ENCODE measurements at regions of chr4 and their contacts with region 1.

Region 1: DNA sequence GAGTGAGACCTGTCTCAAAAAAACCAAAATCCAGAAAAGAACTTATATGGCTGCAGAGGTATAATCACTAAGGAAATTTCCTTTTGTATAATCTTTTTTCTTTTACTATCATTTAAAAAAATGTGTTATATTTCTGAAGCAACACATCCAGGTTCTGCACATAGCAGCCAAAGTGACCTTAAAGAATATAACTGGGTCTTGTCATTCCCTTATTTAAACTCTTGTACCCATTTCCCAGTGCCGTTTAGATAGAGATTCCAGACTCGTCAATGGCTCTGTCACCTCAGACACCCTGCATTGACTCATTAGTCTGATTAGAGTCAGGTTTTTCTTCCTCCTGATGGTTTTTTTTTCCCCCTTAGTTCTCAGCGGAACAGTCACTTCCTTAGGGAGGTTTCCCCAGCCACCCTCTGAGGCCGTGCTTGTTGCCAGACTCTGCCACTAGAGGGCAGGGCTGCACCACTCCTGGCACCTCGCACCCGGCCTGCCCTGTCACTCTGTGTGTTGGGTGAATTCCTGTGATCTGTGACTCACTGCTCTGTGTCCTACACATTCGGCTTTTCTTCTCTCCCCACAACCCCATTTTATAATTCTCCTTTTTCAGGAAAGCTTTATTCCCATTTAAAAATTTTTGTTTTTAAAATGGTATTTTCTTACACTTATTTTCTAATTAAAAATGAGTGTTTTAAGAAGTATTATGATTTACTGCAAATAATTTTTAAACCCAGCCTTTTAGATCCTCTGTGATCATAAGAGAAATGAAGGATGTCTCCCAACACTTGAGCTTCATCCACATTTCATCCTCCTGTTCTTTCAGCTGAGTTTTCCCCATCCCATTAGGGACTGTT is 32.1 kb downstream of the HTT start:
- DNase-seq: peak; percentile 98
- H3K4me3 Mint-ChIP-seq: no peak overlapping the region
- H3K27ac Mint-ChIP-seq: peak overlapping the region; percentile 34
- H3K4me1 Mint-ChIP-seq: peaks cover 17% of the 10 kb centered on the region
- H3K27me3 Mint-ChIP-seq: no peaks in the 10 kb centered on the region

Region 2: DNA sequence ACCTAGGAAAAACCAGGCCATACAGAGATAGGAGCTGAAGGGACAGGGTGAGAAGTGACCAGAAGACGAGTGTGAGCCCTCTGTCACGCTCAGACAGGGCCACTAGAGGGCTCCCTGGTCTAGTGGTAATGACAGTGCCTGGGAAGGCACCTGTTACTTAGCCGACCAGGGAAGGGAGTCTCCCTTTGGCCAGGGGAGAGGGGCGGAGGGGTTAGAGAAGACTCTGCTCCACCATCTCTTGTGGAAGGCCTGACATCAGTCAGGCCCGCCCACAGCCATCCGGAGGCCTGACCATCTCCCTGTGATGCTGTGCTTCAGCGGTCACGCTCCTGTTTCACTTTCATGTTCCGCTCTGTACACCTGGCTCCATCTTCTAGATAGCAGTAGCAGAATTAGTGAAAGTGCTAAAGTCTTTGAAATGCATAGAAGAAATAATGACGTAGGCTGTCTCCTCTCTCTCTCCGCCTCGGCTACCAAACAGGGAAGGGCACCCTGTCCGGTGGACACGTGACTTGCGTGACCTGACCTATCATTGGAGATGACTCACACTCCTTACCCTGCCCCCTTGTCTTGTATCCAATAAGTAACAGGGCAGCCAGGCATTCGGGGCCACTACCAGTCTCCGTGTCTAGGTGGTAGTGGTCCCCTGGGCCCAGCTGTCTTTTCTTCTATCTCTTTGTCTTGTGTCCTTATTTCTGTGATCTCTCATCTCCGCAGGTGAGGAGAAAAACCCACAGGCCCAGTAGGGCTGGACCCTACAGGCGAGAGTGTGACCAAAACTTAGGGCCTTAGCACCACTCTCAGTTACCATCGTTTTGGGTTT is 58.9 kb before region 1 on chr4:
- CTCF ChIA-PET with region 1: interaction called, 5 read pairs
- intact Hi-C with region 1: loop called (anchors 1 kb)
- DNase-seq: peak; percentile 91
- H3K4me3 Mint-ChIP-seq: peak overlapping the region; percentile 28
- H3K27ac Mint-ChIP-seq: peak overlapping the region; percentile 54
- H3K4me1 Mint-ChIP-seq: peaks cover 31% of the 10 kb centered on the region
- H3K27me3 Mint-ChIP-seq: no peaks in the 10 kb centered on the region

Region 3: DNA sequence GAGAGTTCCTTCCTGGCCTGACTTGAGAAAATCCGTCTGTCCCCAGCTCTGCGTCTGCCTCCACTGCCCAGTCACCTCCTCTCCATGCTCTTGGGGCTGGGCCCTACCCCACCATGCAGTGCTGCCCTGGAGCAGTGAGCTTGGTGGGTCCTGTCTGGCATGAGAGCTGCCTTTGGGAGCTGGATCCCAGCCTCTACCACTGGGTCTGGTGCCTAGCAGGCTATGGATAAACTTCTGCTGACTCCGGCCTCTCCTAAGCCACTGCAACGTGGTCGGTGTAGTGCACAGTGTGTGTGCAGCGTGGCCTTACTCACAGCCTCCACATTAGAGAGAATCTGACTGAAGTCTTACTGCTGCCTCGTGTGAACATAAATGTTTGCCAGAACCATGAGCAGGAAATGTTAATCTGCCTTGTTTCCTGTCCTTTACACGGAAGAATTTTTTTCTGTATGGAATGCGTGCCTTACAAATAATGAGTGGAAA is 15.6 kb after region 1 on chr4:
- CTCF ChIA-PET with region 1: interaction called, 13 read pairs
- intact Hi-C with region 1: no loop called
- DNase-seq: peak; percentile 18
- H3K4me3 Mint-ChIP-seq: no peak overlapping the region
- H3K27ac Mint-ChIP-seq: peak overlapping the region; percentile 39
- H3K4me1 Mint-ChIP-seq: peaks cover 24% of the 10 kb centered on the region
- H3K27me3 Mint-ChIP-seq: no peaks in the 10 kb centered on the region

Region 4: DNA sequence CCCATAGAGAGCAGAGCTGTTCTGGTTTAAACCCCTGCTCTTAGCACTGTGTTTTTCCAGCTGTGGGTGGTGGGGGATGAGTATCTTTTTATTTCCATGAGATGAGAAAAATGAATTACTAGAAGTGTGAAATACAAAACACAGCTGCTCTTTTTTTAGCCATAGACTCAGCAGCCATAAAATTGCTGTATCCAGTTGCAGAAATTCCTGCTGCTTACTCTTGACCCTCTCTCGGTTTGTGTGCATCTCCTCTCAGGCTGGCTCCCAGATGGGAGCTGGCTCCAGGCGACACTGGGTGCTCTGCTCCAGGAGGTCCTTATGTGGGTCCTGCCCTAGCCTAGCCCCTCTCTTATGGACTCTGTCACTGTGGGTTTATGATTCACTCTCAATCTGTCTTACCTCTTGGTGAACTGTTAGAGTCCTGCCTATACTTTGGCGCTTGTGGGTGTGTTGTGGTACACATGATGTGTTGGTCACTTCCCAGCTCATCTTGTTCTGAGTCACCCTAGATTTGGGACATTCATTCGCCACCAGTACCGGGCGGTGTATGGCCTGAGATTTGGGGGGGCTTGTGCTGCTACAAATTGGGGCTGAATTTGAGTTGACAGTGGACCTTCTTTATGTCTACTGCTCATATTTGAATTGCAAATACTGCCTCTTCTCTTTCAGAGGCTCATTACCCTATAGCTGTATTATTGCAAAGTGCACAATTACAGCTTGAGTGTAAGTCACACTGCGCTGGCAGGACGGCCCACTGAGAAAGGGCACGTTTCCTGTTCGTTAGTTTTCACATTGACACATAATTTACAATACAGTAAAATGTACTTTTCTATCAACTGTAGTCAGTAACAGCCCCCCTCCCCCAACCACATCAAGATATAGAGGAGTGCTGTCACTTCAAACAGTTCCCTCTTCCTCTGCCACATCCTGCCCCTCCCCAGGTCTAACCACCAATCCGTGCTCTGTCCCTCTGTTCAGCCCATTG is 95.4 kb after region 1 on chr4:
- CTCF ChIA-PET with region 1: no interaction called
- intact Hi-C with region 1: loop called (anchors 1 kb)
- DNase-seq: peak; percentile 88
- H3K4me3 Mint-ChIP-seq: peak overlapping the region; percentile 44
- H3K27ac Mint-ChIP-seq: peak overlapping the region; percentile 57
- H3K4me1 Mint-ChIP-seq: peaks cover 44% of the 10 kb centered on the region
- H3K27me3 Mint-ChIP-seq: no peaks in the 10 kb centered on the region

Region 5: GRCh38 chr4:3215261-3215660 is 108.7 kb after region 1 on chr4:
- CTCF ChIA-PET with region 1: no interaction called
- intact Hi-C with region 1: no loop called
- DNase-seq: no peak
- H3K4me3 Mint-ChIP-seq: no peak overlapping the region
- H3K27ac Mint-ChIP-seq: no peak overlapping the region
- H3K4me1 Mint-ChIP-seq: no peaks in the 10 kb centered on the region
- H3K27me3 Mint-ChIP-seq: no peaks in the 10 kb centered on the region

Region 6: GRCh38 chr4:3442959-3443749 is 336.6 kb after region 1 on chr4:
- CTCF ChIA-PET with region 1: interaction called, 3 read pairs
- intact Hi-C with region 1: loop called (anchors 1 kb)
- DNase-seq: peak; percentile 71
- H3K4me3 Mint-ChIP-seq: no peak overlapping the region
- H3K27ac Mint-ChIP-seq: no peak overlapping the region
- H3K4me1 Mint-ChIP-seq: no peaks in the 10 kb centered on the region
- H3K27me3 Mint-ChIP-seq: no peaks in the 10 kb centered on the region

Region 7: DNA sequence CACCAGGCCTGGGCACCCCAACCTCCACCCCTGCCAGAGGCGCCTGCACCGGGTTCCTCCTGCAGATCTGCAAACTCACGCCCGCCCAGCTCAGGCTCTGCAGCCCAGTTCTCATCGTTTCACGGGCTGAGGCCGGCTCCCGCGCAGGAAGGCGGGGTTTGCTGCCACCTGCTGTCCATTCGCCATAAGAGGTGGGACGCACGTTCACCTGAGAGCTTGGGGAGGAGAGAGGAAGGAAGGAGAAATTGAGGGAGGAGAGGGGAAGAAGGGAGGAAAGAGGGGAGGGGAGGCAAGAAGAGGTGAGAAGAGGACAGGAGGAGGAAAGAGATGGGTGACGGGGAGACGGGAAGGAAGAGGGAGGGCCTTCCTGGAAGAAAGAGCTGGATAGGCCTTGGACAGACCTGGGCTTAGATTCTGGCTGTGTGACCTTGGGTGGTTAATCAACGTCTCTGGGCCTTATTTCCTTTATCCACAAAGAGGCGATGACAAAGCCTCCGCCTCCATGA is 774.1 kb after region 1 on chr4:
- CTCF ChIA-PET with region 1: no interaction called
- intact Hi-C with region 1: loop called (anchors 5 kb)
- DNase-seq: peak; percentile 85
- H3K4me3 Mint-ChIP-seq: no peak overlapping the region
- H3K27ac Mint-ChIP-seq: no peak overlapping the region
- H3K4me1 Mint-ChIP-seq: peaks cover 12% of the 10 kb centered on the region
- H3K27me3 Mint-ChIP-seq: peaks cover 44% of the 10 kb centered on the region